ENCODE measurements at regions of chr22 and their contacts with region 1.

Region 1: DNA sequence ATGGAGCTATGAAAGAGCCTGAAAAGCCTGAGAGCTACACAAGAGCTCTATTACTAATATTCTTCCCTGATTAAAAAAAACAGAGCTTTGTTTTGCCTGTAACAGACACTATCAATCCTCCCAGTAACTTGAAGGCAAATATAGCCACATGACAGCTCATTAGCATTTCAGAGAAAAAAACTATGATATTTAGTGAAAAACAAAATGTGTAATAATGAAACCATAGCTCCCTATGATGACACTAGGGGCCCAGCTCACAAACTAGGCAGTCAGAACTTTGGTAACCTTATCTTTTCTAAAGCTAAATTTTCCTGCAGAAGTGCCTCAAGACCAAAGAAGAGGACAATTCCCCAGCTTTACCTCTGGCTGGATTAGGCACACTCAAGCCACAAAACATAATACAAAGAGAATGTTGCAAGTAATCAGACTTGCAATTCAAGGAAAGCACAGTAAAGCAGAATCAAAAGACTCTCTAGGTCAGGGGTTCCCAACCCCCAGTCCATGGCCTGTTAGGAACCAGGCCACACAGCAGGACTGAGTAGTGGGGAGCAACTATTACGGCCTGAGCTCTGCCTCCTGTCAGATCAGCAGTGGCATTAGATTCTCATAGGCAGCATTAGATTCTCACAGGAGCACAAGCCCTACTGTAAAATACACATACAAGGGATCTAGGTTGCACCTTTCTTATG is 53.3 kb downstream of the MRTFA start:
- DNase-seq: peak; percentile 42
- ATAC-seq: peak; percentile 81
- H3K4me3 Mint-ChIP-seq: peak overlapping the region; percentile 17
- H3K27ac Mint-ChIP-seq: peak overlapping the region; percentile 80
- H3K4me1 Mint-ChIP-seq: peaks cover 35% of the 10 kb centered on the region
- H3K27me3 Mint-ChIP-seq: no peaks in the 10 kb centered on the region

Region 2: GRCh38 chr22:40597526-40598430 is 14.6 kb after region 1 on chr22:
- CTCF ChIA-PET with region 1: interaction called, 15 read pairs
- POLR2A ChIA-PET with region 1: no interaction called
- intact Hi-C with region 1: no loop called
- DNase-seq: no peak
- ATAC-seq: no peak
- H3K4me3 Mint-ChIP-seq: no peak overlapping the region
- H3K27ac Mint-ChIP-seq: no peak overlapping the region
- H3K4me1 Mint-ChIP-seq: peaks cover 54% of the 10 kb centered on the region
- H3K27me3 Mint-ChIP-seq: no peaks in the 10 kb centered on the region

Region 3: DNA sequence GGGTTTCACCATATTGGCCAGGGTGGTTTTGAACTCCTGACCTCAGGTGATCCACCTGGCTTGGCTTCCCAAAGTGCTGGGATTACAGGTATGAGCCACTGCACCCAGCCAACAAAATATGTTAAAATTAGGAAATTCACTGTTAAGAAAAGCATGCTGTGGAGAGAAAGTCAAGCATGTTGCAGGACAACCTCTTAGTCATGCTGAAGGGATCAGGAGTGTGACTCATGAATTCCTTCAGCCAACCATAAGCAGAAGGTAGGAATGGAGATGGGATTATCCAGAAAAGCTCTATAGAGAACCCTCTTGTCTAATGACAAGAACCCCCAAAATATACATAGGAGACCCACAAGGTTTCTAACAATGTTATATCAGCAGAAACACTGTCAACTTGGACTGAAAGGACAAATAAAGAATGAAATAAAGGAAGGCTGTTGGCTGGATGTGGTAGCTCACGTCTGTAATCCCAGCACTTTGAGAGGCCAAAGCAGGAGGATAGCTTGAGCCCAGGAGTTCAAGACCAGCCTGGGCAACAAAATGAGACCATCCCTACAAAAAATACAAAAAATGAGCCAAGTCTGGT is 37.4 kb after region 1 on chr22:
- CTCF ChIA-PET with region 1: interaction called, 3 read pairs
- POLR2A ChIA-PET with region 1: no interaction called
- intact Hi-C with region 1: loop called in 1 of 2 experiments (anchors 5 kb)
- DNase-seq: no peak
- ATAC-seq: no peak
- H3K4me3 Mint-ChIP-seq: no peak overlapping the region
- H3K27ac Mint-ChIP-seq: no peak overlapping the region
- H3K4me1 Mint-ChIP-seq: peaks cover 21% of the 10 kb centered on the region
- H3K27me3 Mint-ChIP-seq: no peaks in the 10 kb centered on the region

Measured in activated CD4-positive, alpha-beta T cell treated with anti-CD3 and anti-CD28 coated beads for 36 hours (primary cell).